Activated B cell treated with CpG ODN at 0.5 μM for 24 hours (primary cell): ENCODE measurements at regions of chr3 and their contacts with region 1.

Region 1: DNA sequence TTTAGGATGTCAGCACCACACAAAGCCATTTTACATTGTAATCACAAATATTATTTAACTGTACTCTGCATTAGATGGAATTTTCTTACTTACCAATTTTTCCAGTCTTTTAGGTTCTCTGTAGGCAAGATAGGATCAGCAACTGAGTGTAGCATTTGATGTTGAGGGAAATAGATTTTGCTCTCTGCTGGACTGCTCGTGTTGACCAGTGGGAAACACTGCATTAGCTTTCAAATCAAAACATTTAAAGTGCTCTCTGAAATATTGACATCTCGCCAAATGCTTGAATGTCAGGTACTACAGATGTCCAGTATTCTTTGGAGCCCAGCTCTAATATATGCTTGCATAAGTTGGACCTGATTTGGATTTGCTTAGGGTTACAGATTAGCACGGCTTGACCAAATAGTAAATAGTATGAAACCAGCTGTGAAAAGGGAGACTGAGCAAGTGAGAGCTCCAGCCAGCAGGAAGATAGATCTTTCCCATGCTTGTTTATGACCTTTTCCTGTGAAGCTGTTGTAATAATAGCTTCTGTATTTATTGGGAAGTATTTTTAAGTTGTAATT is 29.5 kb downstream of the P2RY14 start:
- DNase-seq: no peak
- ATAC-seq: no peak
- H3K4me3 Mint-ChIP-seq: no peak overlapping the region
- H3K27ac Mint-ChIP-seq: no peak overlapping the region
- H3K4me1 Mint-ChIP-seq: peaks cover 3% of the 10 kb centered on the region
- H3K27me3 Mint-ChIP-seq: no peaks in the 10 kb centered on the region
- CTCF ChIP-seq: no peak

Region 2: GRCh38 chr3:151210676-151211381 is 38.0 kb before region 1 on chr3:
- CTCF ChIA-PET with region 1: no interaction called
- POLR2A ChIA-PET with region 1: no interaction called
- intact Hi-C with region 1: no loop called
- DNase-seq: no peak
- ATAC-seq: peak; percentile 21
- H3K4me3 Mint-ChIP-seq: peak overlapping the region; percentile 38
- H3K27ac Mint-ChIP-seq: no peak overlapping the region
- H3K4me1 Mint-ChIP-seq: peaks cover 9% of the 10 kb centered on the region
- H3K27me3 Mint-ChIP-seq: no peaks in the 10 kb centered on the region
- CTCF ChIP-seq: no peak

Region 3: DNA sequence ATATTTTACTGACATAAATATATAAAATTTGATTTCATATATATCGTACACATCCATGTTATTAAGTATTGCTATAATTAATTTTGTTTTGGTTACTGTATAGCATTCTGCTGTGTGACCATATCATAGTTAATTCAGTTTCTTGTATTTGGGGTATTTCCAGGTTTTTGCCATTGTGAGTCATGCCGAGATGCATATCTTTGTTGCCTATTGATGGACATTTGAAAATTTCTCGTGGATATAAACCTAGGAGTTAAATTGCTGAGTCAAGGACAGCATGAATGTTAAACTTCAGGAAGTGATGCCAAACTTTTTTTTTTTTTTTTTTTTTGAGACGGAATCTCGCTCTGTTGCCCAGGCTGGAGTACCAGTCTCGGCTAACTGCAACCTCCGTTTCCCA is 12.1 kb before region 1 on chr3:
- CTCF ChIA-PET with region 1: interaction called, 3 read pairs
- POLR2A ChIA-PET with region 1: no interaction called
- intact Hi-C with region 1: loop called (anchors 2 kb)
- DNase-seq: no peak
- ATAC-seq: no peak
- H3K4me3 Mint-ChIP-seq: no peak overlapping the region
- H3K27ac Mint-ChIP-seq: no peak overlapping the region
- H3K4me1 Mint-ChIP-seq: peaks cover 9% of the 10 kb centered on the region
- H3K27me3 Mint-ChIP-seq: no peaks in the 10 kb centered on the region
- CTCF ChIP-seq: no peak